ENCODE measurements at regions of chr22 and their contacts with region 1.

Region 1: GRCh38 chr22:19679522-19680101 is 34.7 kb upstream of the SEPTIN5 start:
- DNase-seq: peak in 2 of 10 donors; percentile 8 to 26
- H3K4me3 ChIP-seq: no peak overlapping the region
- H3K27ac ChIP-seq: no peak overlapping the region
- H3K27me3 ChIP-seq: peaks cover 0 to 13% (median 0%) of the 10 kb centered on the region in 45 donors
- CTCF ChIP-seq: peak; percentile 41 to 83 (median 74)

Region 2: DNA sequence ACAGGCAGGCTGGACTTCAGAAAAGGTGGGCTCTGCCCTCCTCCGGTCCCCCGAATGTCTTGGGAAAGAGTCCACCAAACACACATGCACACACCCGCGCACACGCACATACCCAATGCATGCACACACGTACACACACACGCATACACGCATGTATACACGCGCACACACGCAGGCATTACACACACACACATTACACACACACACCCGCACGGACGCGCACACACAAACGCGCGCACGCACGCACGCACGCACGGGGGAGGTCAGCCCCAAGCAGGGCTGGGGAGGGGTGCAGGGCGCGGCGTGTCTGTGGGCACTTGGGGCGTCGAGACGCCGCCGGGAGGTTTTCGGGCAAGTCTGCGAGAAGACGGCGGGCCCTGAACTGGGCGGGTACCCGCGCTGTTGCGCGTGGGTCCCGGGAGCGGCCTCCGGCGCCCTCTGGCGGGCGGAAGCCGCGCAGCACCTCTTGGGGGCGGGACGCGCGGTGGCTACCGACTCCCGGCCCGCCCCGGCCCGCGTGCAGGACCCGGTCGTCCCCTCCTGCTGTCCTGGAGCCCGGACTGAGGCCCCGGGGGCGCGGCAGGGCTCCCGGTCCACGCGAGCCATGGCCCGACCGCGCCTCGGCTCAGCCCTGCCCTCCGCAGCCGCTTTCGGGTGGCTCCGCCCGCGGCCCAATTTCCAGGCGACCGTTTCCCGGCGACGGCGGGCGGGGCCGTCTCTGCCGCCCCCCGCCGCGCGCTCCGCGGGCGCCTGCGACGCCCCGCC is 38.3 kb after region 1 on chr22:
- intact Hi-C with region 1: loop called (anchors 2 to 5 kb)
- DNase-seq: peak in 9 of 10 donors; percentile 52 to 85 (median 65)
- H3K4me3 ChIP-seq: peak overlapping the region; percentile 20 to 77 (median 66)
- H3K27ac ChIP-seq: peak overlapping the region in 42 of 59 donors; percentile 61 to 97 (median 84)
- H3K27me3 ChIP-seq: peaks cover 0 to 5% (median 0%) of the 10 kb centered on the region in 45 donors
- CTCF ChIP-seq: peak; percentile 70 to 99 (median 93)

Region 3: DNA sequence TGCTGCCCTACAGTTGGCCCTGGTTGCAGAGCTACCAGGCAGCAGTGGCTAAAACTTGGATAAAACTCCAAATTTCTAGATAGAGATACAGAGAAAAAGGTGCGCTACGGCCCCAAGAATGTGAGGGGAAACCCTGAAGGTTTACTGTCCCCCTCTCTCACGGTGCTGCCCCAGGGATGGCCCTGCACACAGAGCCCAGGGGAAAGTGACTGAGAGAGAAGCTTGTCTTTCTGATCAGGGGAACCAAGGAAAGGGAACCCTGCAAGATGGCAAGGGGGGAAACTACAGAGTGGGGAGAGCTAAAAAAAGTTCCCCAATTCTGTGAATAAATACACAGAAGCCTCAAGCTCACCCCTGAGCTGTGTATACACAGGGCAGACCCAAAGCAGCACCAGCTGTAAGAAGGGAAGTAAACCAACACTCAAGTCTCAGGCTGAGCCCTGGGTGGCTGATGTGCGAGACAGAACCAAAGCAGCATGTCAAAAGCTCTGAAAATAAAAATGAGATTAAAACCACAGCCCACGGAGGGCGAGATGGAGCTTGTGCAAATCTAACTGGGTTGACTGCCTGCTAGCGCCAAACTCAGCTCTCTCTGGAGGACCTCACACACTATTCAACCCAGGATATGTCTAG is 153.0 kb after region 1 on chr22:
- intact Hi-C with region 1: no loop called
- DNase-seq: peak in 5 of 10 donors; percentile 0 to 19 (median 12)
- H3K4me3 ChIP-seq: no peak overlapping the region
- H3K27ac ChIP-seq: no peak overlapping the region
- H3K27me3 ChIP-seq: no peaks in the 10 kb centered on the region
- CTCF ChIP-seq: no peak